ENCODE measurements at regions of chr3 and their contacts with region 1.

Region 1: GRCh38 chr3:32238453-32239306 is at the start of gene CMTM8:
- DNase-seq: peak; percentile 35
- ATAC-seq: peak; percentile 81
- H3K4me3 ChIP-seq: peak within 1 kb of the TSS; percentile 84 to 92 (median 87)
- H3K27ac ChIP-seq: peak within 1 kb of the TSS; percentile 95
- H3K4me1 ChIP-seq: peaks cover 68% of the 10 kb centered on the region
- H3K27me3 ChIP-seq: no peaks in the 10 kb centered on the region
- CTCF ChIP-seq: no peak; the same call in 1 of the 2 replicates
- EP300 ChIP-seq: no peak
- POLR2A ChIP-seq: peak; percentile 46 to 79
- RAD21 ChIP-seq: no peak; the same call in 1 of the 2 replicates
- total RNA-seq, gene CMTM8: 6.6 and 8.9 TPM in 2 replicates

Region 2: DNA sequence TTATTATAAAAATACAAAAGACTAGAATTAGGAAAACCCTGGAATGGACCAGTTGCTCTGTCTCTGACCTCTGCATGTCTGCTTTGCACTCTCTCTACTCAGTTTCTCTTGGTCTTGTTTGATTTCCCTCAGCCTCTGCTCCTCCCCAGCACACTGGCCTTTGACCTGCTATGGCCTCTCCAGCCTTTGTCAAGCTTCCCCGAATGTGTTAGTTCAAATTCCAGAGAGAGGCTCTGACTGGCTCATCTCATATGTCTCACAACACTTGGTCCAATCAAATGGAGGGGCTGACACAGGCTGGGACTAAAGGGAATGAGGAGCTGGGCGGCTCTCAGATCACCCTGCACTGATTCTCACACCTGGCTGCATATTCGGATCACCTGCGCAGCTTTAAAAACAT is 52.6 kb before region 1 on chr3:
- CTCF ChIA-PET with region 1: no interaction called
- POLR2A ChIA-PET with region 1: interaction called, 9 read pairs
- in situ Hi-C with region 1: no loop called
- intact Hi-C with region 1: loop called (anchors 2 kb)
- DNase-seq: peak; percentile 94
- ATAC-seq: peak; percentile 100
- H3K4me3 ChIP-seq: peak overlapping the region in 1 of 3 experiments; percentile 31; a peak in 1 of 6 replicates
- H3K27ac ChIP-seq: no peak overlapping the region
- H3K4me1 ChIP-seq: peaks cover 45% of the 10 kb centered on the region
- H3K27me3 ChIP-seq: peaks cover 0 to 2% of the 10 kb centered on the region in 2 experiments; a peak in 2 of 5 replicates
- CTCF ChIP-seq: no peak
- EP300 ChIP-seq: peak in 1 of 2 experiments; percentile 65; a peak in 2 of 4 replicates
- POLR2A ChIP-seq: no peak
- RAD21 ChIP-seq: no peak

Region 3: GRCh38 chr3:32216172-32216783 is 22.4 kb before region 1 on chr3:
- CTCF ChIA-PET with region 1: no interaction called
- POLR2A ChIA-PET with region 1: interaction called, 32 read pairs
- in situ Hi-C with region 1: no loop called
- intact Hi-C with region 1: loop called (anchors 1 kb)
- DNase-seq: peak; percentile 99
- ATAC-seq: peak; percentile 99
- H3K4me3 ChIP-seq: peak overlapping the region; percentile 21 to 47 (median 39); a peak in 5 of 6 replicates
- H3K27ac ChIP-seq: peak overlapping the region; percentile 86
- H3K4me1 ChIP-seq: peaks cover 49% of the 10 kb centered on the region
- H3K27me3 ChIP-seq: no peaks in the 10 kb centered on the region
- CTCF ChIP-seq: peak; percentile 11; the same call in 1 of the 2 replicates
- EP300 ChIP-seq: peak; percentile 92 to 99
- POLR2A ChIP-seq: 0 out of 4 replicates have a peak, but pooled peaks of 1 of the 2 experiments have one; percentile 33
- RAD21 ChIP-seq: peak; percentile 35; the same call in 1 of the 2 replicates

Region 4: GRCh38 chr3:32296256-32297204 is 57.9 kb after region 1 on chr3:
- CTCF ChIA-PET with region 1: interaction called, 7 read pairs
- POLR2A ChIA-PET with region 1: interaction called, 5 read pairs
- in situ Hi-C with region 1: no loop called
- intact Hi-C with region 1: loop called (anchors 5 kb)
- DNase-seq: peak; percentile 47
- ATAC-seq: peak; percentile 79
- H3K4me3 ChIP-seq: no peak overlapping the region
- H3K27ac ChIP-seq: no peak overlapping the region
- H3K4me1 ChIP-seq: peaks cover 38% of the 10 kb centered on the region
- H3K27me3 ChIP-seq: no peaks in the 10 kb centered on the region
- CTCF ChIP-seq: peak; percentile 91
- EP300 ChIP-seq: no peak
- POLR2A ChIP-seq: no peak
- RAD21 ChIP-seq: peak; percentile 86

Region 5: DNA sequence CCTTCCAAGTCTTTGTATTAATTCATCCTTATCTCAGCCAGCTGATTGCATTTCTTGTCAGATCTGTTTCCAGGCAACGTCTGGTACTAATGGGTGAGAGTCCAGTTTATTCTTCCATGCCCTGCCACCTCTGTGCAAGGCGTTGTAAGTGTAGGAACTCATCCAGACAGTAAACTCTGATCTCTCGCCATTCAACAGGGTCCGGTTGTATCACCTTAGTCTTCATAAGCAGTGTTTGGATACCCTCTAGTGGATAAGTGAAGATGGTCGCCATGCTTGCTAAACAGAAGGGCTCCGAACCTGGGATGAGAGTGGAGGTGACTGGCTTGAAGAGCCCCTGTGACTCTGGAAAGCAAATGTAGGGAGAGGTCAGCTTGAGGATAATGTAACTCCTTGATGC is 101.4 kb after region 1 on chr3:
- CTCF ChIA-PET with region 1: no interaction called
- POLR2A ChIA-PET with region 1: no interaction called
- in situ Hi-C with region 1: no loop called
- intact Hi-C with region 1: loop called (anchors 2 kb)
- DNase-seq: peak; percentile 80
- ATAC-seq: peak; percentile 94
- H3K4me3 ChIP-seq: no peak overlapping the region
- H3K27ac ChIP-seq: no peak overlapping the region
- H3K4me1 ChIP-seq: peaks cover 35% of the 10 kb centered on the region
- H3K27me3 ChIP-seq: no peaks in the 10 kb centered on the region
- CTCF ChIP-seq: peak; percentile 88
- EP300 ChIP-seq: no peak
- POLR2A ChIP-seq: no peak
- RAD21 ChIP-seq: peak; percentile 78

Region 6: GRCh38 chr3:32401556-32402081 is 162.9 kb after region 1 on chr3:
- CTCF ChIA-PET with region 1: no interaction called
- POLR2A ChIA-PET with region 1: no interaction called
- in situ Hi-C with region 1: no loop called
- intact Hi-C with region 1: loop called (anchors 1 kb)
- DNase-seq: peak; percentile 46
- ATAC-seq: peak; percentile 96
- H3K4me3 ChIP-seq: peak overlapping the region; percentile 69 to 75 (median 73)
- H3K27ac ChIP-seq: peak overlapping the region; percentile 87
- H3K4me1 ChIP-seq: peaks cover 51% of the 10 kb centered on the region
- H3K27me3 ChIP-seq: no peaks in the 10 kb centered on the region
- CTCF ChIP-seq: no peak
- EP300 ChIP-seq: no peak
- POLR2A ChIP-seq: peak in 1 of 2 experiments; percentile 33; a peak in 1 of 4 replicates
- RAD21 ChIP-seq: peak; percentile 55; the same call in 1 of the 2 replicates

Region 7: DNA sequence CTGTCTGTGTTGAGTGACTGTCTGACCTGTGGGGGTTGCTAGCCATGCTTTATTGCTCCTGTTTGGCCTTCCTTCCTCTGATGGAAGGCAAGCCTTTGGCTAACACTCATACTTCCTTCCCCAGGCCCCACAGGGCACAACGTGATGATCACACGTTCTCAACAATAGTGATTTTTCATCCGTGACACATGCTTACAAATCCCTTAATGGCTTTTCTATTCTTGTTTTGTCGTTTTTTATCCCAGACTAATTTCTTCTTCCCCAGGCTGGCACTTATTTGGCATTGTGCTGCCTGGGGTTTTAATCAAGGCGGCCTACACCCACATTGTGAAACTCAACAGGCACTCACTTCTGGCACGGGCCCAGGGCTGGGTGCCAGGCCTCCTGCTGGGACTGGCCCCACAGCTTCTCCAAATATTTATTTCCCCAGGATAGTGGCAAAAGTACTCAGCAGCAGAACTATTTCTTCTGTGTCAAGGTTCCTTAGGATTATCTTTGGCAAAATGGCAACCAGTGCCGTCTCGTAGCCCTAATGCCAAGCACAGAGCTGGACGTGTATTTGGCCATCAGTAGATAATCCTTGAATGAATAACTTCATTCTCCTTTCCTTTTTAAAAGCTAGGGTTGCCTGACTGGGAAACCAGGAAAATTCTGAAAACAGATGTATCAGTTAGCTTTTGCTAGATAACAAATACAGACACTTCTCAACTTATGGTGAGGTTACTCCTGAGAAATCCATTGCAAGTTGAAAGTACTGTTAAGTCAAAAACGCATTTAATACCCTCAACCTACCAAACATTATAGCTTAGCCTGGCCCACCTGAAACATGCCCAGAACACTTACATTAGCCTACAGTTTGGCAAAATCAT is 183.5 kb after region 1 on chr3:
- CTCF ChIA-PET with region 1: no interaction called
- POLR2A ChIA-PET with region 1: no interaction called
- in situ Hi-C with region 1: no loop called
- intact Hi-C with region 1: no loop called
- DNase-seq: no peak
- ATAC-seq: no peak
- H3K4me3 ChIP-seq: no peak overlapping the region
- H3K27ac ChIP-seq: no peak overlapping the region
- H3K4me1 ChIP-seq: peaks cover 47% of the 10 kb centered on the region
- H3K27me3 ChIP-seq: no peaks in the 10 kb centered on the region
- CTCF ChIP-seq: no peak
- EP300 ChIP-seq: no peak
- POLR2A ChIP-seq: no peak
- RAD21 ChIP-seq: no peak

Region 8: GRCh38 chr3:32522682-32523081 is 284.0 kb after region 1 on chr3:
- CTCF ChIA-PET with region 1: no interaction called
- POLR2A ChIA-PET with region 1: no interaction called
- in situ Hi-C with region 1: no loop called
- intact Hi-C with region 1: no loop called
- DNase-seq: no peak
- ATAC-seq: no peak
- H3K4me3 ChIP-seq: no peak overlapping the region
- H3K27ac ChIP-seq: no peak overlapping the region
- H3K4me1 ChIP-seq: no peaks in the 10 kb centered on the region
- H3K27me3 ChIP-seq: no peaks in the 10 kb centered on the region
- CTCF ChIP-seq: no peak
- EP300 ChIP-seq: no peak
- POLR2A ChIP-seq: no peak
- RAD21 ChIP-seq: no peak